Ascending aorta (tissue), 2 donors: ENCODE measurements at regions of chr1 and their contacts with region 1.

Region 1: DNA sequence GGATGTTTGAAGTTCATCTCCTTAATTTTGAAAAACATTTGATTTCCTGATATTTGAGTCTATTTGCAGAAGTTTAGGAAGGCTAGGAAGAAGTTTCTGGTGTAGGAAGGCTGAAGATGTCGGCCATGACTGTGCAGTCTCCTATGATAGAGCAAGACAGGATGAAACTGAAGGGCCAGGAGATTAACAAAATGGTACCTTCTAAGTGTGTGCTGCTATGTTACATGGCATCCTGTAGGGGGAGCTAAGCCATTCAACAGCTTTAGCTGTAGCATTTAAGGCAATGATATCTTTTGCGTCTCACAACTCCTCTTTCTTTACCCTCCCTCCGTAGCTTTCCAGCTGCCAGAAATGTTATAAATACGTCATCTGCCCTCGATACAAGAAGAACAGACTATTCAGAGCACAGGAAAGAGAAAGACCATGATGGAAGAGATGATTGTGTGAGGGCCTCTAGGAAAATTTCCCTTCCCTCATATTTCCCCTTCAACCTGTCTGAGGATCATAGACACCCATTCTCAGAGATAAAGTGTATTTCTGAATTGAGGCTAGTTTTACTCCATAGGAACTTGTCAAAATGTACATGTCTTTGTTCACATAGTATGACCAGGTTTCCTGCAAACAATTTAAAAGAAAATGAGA is 61.1 kb downstream of the XCL1 start:
- DNase-seq: no peak
- H3K4me3 ChIP-seq: no peak overlapping the region
- H3K27ac ChIP-seq: peak overlapping the region; percentile 61 to 67
- H3K4me1 ChIP-seq: peaks cover 0 to 12% of the 10 kb centered on the region in 2 donors
- H3K27me3 ChIP-seq: no peaks in the 10 kb centered on the region
- CTCF ChIP-seq: peak in 1 of 3 experiments; percentile 21

Region 2: GRCh38 chr1:168301664-168302334 is 335.7 kb before region 1 on chr1:
- intact Hi-C with region 1: no loop called
- DNase-seq: no peak
- H3K4me3 ChIP-seq: no peak overlapping the region
- H3K27ac ChIP-seq: no peak overlapping the region
- H3K4me1 ChIP-seq: no peaks in the 10 kb centered on the region
- H3K27me3 ChIP-seq: no peaks in the 10 kb centered on the region
- CTCF ChIP-seq: no peak

Region 3: GRCh38 chr1:168653567-168653966 is 16.1 kb after region 1 on chr1:
- intact Hi-C with region 1: no loop called
- DNase-seq: no peak
- H3K4me3 ChIP-seq: no peak overlapping the region
- H3K27ac ChIP-seq: no peak overlapping the region
- H3K4me1 ChIP-seq: peaks cover 3 to 4% of the 10 kb centered on the region in 2 donors
- H3K27me3 ChIP-seq: no peaks in the 10 kb centered on the region
- CTCF ChIP-seq: no peak

Region 4: DNA sequence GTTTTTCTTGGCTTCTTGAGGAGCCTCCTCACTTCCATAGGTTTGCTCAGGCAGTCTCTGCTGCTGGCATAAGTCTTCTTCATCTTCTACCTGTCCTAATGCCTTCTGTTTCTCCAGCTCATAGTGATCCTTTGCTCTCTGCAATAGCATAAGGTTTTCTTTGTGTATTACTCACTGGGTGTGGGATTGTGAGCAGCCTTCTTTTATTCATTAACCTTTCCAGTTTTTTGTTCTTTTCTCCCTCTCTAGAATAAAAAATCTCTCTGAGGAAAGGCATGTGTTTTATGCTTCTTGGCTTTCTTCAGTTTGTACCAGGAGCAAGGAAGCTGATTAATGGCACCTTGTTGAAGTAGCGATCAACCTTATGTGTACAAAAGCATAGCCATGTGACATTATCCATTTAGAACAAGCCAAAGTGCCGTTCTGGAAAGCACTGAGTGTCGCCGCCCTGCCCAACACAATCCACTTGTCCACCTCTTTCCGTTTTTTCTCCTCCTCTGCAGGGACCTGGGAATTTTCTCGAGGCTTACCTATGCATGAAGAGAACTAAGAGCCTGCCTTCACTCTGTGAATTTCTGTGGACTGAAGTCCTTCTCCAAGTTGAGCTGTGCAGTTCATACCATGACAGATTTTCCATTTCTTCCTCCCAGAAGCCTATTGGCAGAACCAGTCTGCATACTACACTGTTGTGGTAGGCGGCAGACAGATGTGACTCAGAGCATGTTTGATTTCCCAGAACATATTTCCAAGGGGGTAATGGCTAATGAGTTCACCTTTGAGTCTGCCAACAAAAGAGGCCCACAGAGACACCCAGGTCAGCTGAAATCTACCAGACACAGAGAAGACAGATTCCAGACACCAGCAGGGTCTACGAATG is 52.5 kb after region 1 on chr1:
- intact Hi-C with region 1: loop called (anchors 2 kb)
- DNase-seq: peak in 1 of 2 donors; percentile 73
- H3K4me3 ChIP-seq: peak overlapping the region in 1 of 2 donors; percentile 25
- H3K27ac ChIP-seq: peak overlapping the region; percentile 42 to 58
- H3K4me1 ChIP-seq: no peaks in the 10 kb centered on the region
- H3K27me3 ChIP-seq: no peaks in the 10 kb centered on the region
- CTCF ChIP-seq: no peak

Region 5: GRCh38 chr1:168893359-168893801 is 255.9 kb after region 1 on chr1:
- intact Hi-C with region 1: loop called (anchors 5 kb)
- DNase-seq: peak; percentile 9 to 71
- H3K4me3 ChIP-seq: no peak overlapping the region
- H3K27ac ChIP-seq: peak overlapping the region; percentile 49 to 57
- H3K4me1 ChIP-seq: no peaks in the 10 kb centered on the region
- H3K27me3 ChIP-seq: no peaks in the 10 kb centered on the region
- CTCF ChIP-seq: no peak